Posterior vena cava (tissue), 2 donors: ENCODE measurements at regions of chr10 and their contacts with region 1.

Region 1: DNA sequence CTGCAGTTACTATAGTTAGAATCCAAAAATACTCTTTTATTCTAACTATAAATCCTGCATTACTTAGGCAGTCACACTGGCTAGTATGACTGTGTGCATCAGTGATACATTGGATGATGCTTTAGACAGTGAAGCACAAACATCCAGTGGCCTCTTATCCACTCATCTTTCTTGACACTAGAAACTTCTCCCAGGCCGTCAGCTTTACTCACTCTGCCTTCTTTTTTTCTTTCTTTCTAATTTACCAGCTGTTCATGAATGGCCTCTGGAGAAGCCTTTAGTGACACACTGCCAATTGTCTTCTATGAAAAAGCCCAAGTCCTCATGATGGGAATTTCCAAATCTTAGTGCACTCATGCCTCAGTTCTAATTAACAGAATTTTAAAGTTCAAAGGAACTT is 26.2 kb upstream of the C10orf90 start:
- DNase-seq: no peak

Region 2: GRCh38 chr10:127774766-127775559 is 1078.3 kb after region 1 on chr10:
- intact Hi-C with region 1: loop called in 1 of 2 experiments (anchors 10 kb)
- DNase-seq: no peak